HAP-1 (cell line): ENCODE measurements at regions of chr4 and their contacts with region 1.

Region 1: DNA sequence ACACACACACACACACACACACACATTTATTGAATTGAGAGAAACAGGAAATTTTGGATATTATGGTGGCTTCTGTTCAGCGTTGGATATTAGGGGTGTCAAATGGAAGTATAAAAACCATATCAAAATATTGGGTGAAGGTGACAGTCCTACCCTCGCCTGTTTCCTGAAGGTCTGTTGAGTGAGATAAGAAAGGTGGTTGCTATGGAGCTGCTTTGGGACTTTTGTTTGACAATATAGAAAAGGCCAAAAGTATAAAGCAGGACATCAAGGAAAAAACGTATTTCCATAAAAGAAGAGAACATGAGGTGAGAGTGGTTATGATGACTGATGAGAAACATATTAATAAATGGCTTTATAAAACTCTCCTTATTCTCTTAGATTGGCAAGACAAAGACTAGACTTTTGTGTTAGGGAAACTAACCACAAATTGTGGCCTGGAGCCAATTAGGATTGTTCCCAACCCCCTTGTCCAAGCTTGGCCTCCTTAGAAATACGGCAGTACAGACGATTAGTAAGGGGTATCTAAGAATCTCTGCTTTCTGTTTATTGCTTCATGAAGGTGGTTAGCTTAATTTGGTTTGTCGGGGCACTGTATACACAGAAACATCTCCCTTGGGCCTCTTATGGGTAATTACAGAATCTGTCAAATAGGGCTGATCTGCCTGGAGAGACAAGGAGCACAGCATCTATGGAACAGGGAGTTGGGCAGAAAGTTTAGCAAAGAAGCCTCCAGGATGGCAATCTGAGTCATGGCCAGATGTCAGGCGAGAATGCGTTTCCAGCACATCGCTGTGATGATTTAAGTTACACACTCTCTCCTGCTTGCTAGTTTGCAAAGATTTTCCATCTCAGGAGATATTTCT is 198.0 kb downstream of the CBR4 start:
- DNase-seq: no peak
- H3K4me3 ChIP-seq: no peak overlapping the region
- H3K4me1 ChIP-seq: peaks cover 20% of the 10 kb centered on the region
- H3K27me3 ChIP-seq: no peaks in the 10 kb centered on the region

Region 2: DNA sequence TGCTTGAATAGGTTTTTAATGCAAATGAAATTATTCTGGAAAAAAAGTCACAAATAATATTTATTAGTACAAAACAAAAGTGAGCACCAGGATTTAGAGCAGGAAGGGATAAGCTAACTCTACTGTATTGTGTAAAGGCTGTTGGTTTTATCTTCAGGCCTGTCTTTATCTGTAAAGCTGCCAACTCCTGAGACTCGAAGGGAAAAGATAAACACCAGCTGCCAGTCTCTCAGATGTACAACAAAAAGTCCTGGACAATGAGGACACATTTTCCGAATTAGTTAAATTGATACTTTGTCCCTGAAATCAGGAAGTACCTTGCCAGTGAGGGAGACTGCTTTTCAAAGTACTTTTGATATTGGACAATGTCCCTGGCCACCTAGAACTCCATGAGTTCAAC is 502.2 kb before region 1 on chr4:
- in situ Hi-C with region 1: no loop called
- DNase-seq: no peak
- H3K4me3 ChIP-seq: no peak overlapping the region
- H3K4me1 ChIP-seq: no peaks in the 10 kb centered on the region
- H3K27me3 ChIP-seq: no peaks in the 10 kb centered on the region

Region 3: GRCh38 chr4:168723020-168723419 is 89.0 kb before region 1 on chr4:
- in situ Hi-C with region 1: loop called (anchors 5 kb)
- DNase-seq: no peak
- H3K4me3 ChIP-seq: no peak overlapping the region
- H3K4me1 ChIP-seq: peaks cover 16% of the 10 kb centered on the region
- H3K27me3 ChIP-seq: no peaks in the 10 kb centered on the region